Pancreas (tissue), 10 donors: ENCODE measurements at regions of chrX and their contacts with region 1.

Region 1: DNA sequence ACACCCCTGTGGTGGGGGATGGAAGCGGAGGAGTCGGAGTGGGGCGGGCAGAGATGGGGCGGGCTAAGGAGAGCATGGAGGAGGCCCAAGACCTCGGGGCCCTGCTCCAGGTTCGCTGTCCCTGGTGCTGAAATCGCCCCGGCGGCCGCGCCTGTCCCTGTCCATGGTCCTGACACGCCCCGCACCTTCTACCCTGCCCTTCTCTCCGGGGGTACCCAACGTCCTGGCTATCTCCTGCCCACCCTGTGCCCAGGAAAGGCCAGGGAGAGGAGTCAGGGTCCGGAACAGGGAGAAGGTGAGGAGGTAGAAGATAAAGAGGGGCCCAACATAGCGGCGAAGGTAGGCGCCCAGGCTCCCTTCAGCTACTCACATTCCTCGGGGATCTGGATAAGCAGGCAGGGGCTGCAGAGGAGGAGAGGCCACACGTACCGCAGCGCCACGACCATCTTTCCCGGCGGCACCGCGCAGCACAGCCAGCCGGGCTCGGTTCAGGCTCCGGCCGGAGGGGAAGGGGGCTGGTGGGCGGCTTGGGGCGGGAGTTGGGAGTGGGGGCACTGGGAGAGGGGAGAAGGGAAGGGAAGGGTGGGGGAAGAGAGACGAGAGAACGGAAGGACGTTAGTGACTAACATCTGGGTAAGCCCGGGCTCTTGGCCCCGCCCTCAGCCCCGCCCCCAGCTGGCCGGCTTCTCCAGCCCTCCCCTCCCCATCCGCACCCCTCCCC is 10.4 kb downstream of the L1CAM start:
- DNase-seq: peak; percentile 12 to 85 (median 60)
- ATAC-seq: peak; percentile 64 to 98 (median 85)
- H3K4me3 ChIP-seq: no peak overlapping the region
- H3K27ac ChIP-seq: no peak overlapping the region
- H3K4me1 ChIP-seq: no peaks in the 10 kb centered on the region
- H3K27me3 ChIP-seq: peaks cover 0 to 3% (median 0%) of the 10 kb centered on the region in 4 donors
- CTCF ChIP-seq: no peak

Region 2: GRCh38 chrX:153763989-153764755 is 111.4 kb before region 1 on chrX and contains the start of gene PLXNB3:
- intact Hi-C with region 1: no loop called
- DNase-seq: peak; percentile 67 to 96 (median 86)
- ATAC-seq: peak; percentile 88 to 95 (median 91)
- H3K4me3 ChIP-seq: peak within 1 kb of the TSS in 1 of 4 donors; percentile 8
- H3K27ac ChIP-seq: peak within 1 kb of the TSS in 3 of 4 donors; percentile 12 to 53 (median 34)
- H3K4me1 ChIP-seq: no peaks in the 10 kb centered on the region
- H3K27me3 ChIP-seq: peaks cover 0 to 3% (median 0%) of the 10 kb centered on the region in 4 donors
- CTCF ChIP-seq: peak; percentile 82 to 93 (median 88)
- total RNA-seq, gene PLXNB3: 4.0 to 9.0 (median 5.2) TPM

Region 3: GRCh38 chrX:153818571-153819383 is 56.8 kb before region 1 on chrX:
- intact Hi-C with region 1: loop called in 1 of 3 experiments (anchors 10 kb)
- DNase-seq: peak in 2 of 6 donors; percentile 61 to 77
- ATAC-seq: peak; percentile 61 to 95 (median 88)
- H3K4me3 ChIP-seq: peak overlapping the region in 2 of 4 donors; percentile 23 to 46
- H3K27ac ChIP-seq: no peak overlapping the region
- H3K4me1 ChIP-seq: no peaks in the 10 kb centered on the region
- H3K27me3 ChIP-seq: peaks cover 0 to 17% (median 0%) of the 10 kb centered on the region in 4 donors
- CTCF ChIP-seq: no peak

Region 4: DNA sequence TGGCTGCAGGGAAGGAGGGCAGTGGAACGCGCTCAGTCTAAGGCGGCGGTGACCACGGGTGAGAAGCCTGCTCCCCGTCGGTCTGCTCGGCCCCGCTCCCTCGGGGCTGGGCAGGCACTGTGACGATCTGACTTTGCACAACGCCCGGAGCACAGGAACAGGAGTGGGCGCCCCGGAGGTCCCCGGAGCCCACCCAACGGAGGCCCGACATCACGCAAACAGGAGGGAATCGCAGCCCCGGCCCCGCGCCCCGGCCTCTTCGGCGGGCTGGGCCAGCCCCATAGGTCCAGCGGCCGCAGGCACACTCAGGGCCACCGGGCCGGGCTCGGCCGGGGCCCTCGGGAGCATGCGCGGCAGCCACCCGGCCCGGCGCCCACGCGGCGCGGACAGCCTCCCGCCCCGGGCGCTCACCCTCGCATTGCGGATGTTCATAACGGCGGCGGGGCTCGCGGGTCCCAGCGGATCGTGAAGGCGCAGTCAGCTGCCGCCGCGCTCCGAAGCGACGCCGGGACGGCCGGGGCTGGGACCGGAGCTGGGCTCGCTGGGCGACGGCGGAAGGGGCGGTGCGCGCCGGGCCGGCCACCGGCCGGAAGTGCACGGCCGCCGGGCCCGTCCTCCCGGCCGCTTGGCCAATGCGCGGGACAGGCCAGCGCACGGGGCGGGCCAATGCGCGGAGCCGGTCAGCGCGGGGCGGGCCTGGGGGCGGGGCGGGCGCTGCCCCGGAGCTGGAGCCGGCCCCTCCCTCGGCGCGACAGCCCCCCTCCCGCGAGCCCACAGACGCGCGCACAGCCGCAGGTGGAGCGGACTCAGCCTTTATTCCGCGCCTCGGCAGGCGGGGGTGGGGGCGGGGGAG is 59.1 kb after region 1 on chrX and contains the start of gene NAA10:
- intact Hi-C with region 1: loop called in 1 of 3 experiments (anchors 10 kb)
- DNase-seq: peak; percentile 71 to 87 (median 82)
- ATAC-seq: peak; percentile 96 to 98 (median 97)
- H3K4me3 ChIP-seq: peak within 1 kb of the TSS; percentile 57 to 77 (median 68)
- H3K27ac ChIP-seq: no peak within 1 kb of the TSS
- H3K4me1 ChIP-seq: no peaks in the 10 kb centered on the region
- H3K27me3 ChIP-seq: no peaks in the 10 kb centered on the region
- CTCF ChIP-seq: no peak
- total RNA-seq, gene NAA10: 24.5 to 49.0 (median 40.3) TPM

Region 5: GRCh38 chrX:154063234-154063633 is 187.7 kb after region 1 on chrX:
- intact Hi-C with region 1: no loop called
- DNase-seq: no peak
- ATAC-seq: no peak
- H3K4me3 ChIP-seq: no peak overlapping the region
- H3K27ac ChIP-seq: no peak overlapping the region
- H3K4me1 ChIP-seq: peaks cover 0 to 5% (median 0%) of the 10 kb centered on the region in 3 donors
- H3K27me3 ChIP-seq: peaks cover 0 to 3% (median 0%) of the 10 kb centered on the region in 4 donors
- CTCF ChIP-seq: no peak